HepG2 (cell line): ENCODE measurements at regions of chr7 and their contacts with region 1.

Region 1: GRCh38 chr7:46352004-46352954 is 431.2 kb upstream of the IGFBP3 start:
- DNase-seq: peak; percentile 57
- ATAC-seq: peak; percentile 85
- H3K4me3 ChIP-seq: no peak overlapping the region
- H3K27ac ChIP-seq: no peak overlapping the region
- H3K4me1 ChIP-seq: no peaks in the 10 kb centered on the region
- H3K27me3 ChIP-seq: peaks cover 0 to 2% of the 10 kb centered on the region in 2 experiments; a peak in 1 of 5 replicates
- CTCF ChIP-seq: peak; percentile 87
- EP300 ChIP-seq: no peak
- POLR2A ChIP-seq: no peak
- RAD21 ChIP-seq: peak; percentile 84

Region 2: GRCh38 chr7:45917658-45918057 is 434.6 kb before region 1 on chr7:
- CTCF ChIA-PET with region 1: interaction called, 52 read pairs
- POLR2A ChIA-PET with region 1: no interaction called
- in situ Hi-C with region 1: loop called (anchors 5 kb)
- intact Hi-C with region 1: loop called (anchors 1 kb)
- DNase-seq: peak; percentile 28
- ATAC-seq: peak; percentile 81
- H3K4me3 ChIP-seq: no peak overlapping the region
- H3K27ac ChIP-seq: no peak overlapping the region
- H3K4me1 ChIP-seq: peaks cover 22% of the 10 kb centered on the region
- H3K27me3 ChIP-seq: peaks cover 5 to 41% of the 10 kb centered on the region in 2 experiments; a peak in 4 of 5 replicates
- CTCF ChIP-seq: peak; percentile 89
- EP300 ChIP-seq: no peak
- POLR2A ChIP-seq: no peak
- RAD21 ChIP-seq: peak; percentile 66

Region 3: DNA sequence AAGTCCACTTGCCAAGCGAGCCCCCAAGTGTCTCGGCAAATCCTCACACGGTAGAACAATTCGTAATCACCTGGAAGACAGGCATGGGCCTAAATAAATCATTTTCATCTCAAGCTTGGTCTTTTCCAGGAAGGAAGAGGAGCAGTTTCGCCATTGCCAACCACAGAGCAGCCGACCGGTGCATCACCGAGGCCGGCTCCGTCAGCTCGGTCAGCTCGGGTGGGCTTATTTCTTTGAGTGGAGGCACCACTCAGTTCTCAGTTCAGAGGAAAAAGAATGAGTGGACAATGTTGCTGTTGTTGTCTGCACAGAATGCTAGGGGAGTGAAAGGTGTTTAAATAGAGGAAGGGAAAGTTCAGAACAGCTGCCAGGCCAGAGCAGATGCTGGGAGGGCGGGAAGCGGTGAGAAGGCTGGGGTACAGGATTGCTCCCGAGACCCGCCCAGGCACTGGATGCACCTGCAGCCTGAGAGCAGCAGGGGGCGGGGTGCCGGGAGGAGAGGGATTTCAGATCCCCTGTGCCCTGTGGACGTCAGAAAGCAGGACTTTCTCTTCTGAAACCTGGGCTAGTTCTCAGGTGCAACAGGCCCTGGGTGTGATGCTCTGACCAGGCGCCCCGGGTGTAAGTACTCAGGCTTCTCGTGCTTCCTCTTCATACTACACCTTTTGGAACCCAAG is 413.5 kb before region 1 on chr7:
- CTCF ChIA-PET with region 1: interaction called, 9 read pairs
- POLR2A ChIA-PET with region 1: no interaction called
- in situ Hi-C with region 1: no loop called
- intact Hi-C with region 1: loop called (anchors 1 kb)
- DNase-seq: peak; percentile 44
- ATAC-seq: peak; percentile 99
- H3K4me3 ChIP-seq: peak overlapping the region in 1 of 3 experiments; percentile 26; a peak in 1 of 6 replicates
- H3K27ac ChIP-seq: no peak overlapping the region
- H3K4me1 ChIP-seq: peaks cover 21% of the 10 kb centered on the region; the same call in 1 of the 2 replicates
- H3K27me3 ChIP-seq: peaks cover 1 to 3% of the 10 kb centered on the region in 2 experiments; a peak in 2 of 5 replicates
- CTCF ChIP-seq: peak; percentile 82
- EP300 ChIP-seq: no peak
- POLR2A ChIP-seq: no peak
- RAD21 ChIP-seq: peak; percentile 78

Region 4: GRCh38 chr7:46153951-46154787 is 198.1 kb before region 1 on chr7:
- CTCF ChIA-PET with region 1: no interaction called
- POLR2A ChIA-PET with region 1: no interaction called
- in situ Hi-C with region 1: no loop called
- intact Hi-C with region 1: loop called (anchors 5 kb)
- DNase-seq: peak; percentile 87
- ATAC-seq: peak; percentile 93
- H3K4me3 ChIP-seq: peak overlapping the region in 1 of 3 experiments; percentile 13; a peak in 1 of 6 replicates
- H3K27ac ChIP-seq: peak overlapping the region; percentile 85
- H3K4me1 ChIP-seq: peaks cover 69% of the 10 kb centered on the region
- H3K27me3 ChIP-seq: no peaks in the 10 kb centered on the region
- CTCF ChIP-seq: peak; percentile 57
- EP300 ChIP-seq: peak in 1 of 2 experiments; percentile 86; a peak in 2 of 4 replicates
- POLR2A ChIP-seq: no peak
- RAD21 ChIP-seq: peak; percentile 17; the same call in 1 of the 2 replicates

Region 5: DNA sequence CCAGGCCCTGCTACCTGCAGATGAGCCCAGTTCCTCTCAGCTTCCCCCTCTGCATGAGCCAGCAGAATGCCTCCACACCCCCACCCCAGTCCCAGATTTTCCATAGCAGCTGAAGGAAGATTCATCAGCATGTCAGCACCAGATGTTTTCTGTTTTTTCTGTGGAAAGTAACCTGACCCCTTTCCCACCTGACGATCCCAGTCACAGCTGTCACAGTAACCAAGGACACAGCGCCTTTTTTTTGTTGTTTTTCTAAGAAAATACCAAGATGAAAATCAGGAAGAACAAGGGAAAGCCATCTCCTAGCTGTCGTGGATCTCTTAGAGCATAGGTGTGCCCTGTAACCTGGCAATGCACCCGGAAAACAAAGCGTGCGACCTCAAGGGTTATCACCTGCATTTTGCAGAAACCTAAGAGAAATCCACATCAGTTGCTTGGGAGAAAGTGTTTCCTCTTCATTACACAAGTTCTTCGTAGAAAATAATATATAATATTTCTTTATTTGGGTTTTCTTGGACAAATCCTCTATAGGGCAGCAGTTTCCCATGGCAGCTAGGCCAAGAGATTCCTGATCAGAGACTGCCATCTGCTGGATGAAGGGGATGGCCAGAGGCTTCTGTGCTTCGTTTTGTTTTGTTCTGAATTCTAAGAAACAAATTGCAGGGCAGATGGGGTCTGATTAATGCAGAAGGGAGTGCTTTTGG is 827.7 kb after region 1 on chr7:
- CTCF ChIA-PET with region 1: no interaction called
- POLR2A ChIA-PET with region 1: no interaction called
- in situ Hi-C with region 1: no loop called
- intact Hi-C with region 1: loop called (anchors 1 kb)
- DNase-seq: peak; percentile 49
- ATAC-seq: peak; percentile 93
- H3K4me3 ChIP-seq: no peak overlapping the region
- H3K27ac ChIP-seq: no peak overlapping the region
- H3K4me1 ChIP-seq: peaks cover 14% of the 10 kb centered on the region
- H3K27me3 ChIP-seq: peaks cover 0 to 7% of the 10 kb centered on the region in 2 experiments; a peak in 2 of 5 replicates
- CTCF ChIP-seq: peak; percentile 80
- EP300 ChIP-seq: no peak
- POLR2A ChIP-seq: no peak
- RAD21 ChIP-seq: peak; percentile 78; the same call in 1 of the 2 replicates